ENCODE measurements at regions of chr16 and their contacts with region 1.

Region 1: GRCh38 chr16:74606521-74607310 is at the start of gene GLG1:
- DNase-seq: peak; percentile 91 to 95
- H3K4me3 ChIP-seq: peak within 1 kb of the TSS; percentile 92
- H3K4me3 Mint-ChIP-seq: peak within 1 kb of the TSS; percentile 100
- H3K27ac Mint-ChIP-seq: peak within 1 kb of the TSS; percentile 99
- H3K4me1 ChIP-seq: peaks cover 22% of the 10 kb centered on the region
- H3K4me1 Mint-ChIP-seq: peaks cover 14% of the 10 kb centered on the region
- H3K27me3 ChIP-seq: no peaks in the 10 kb centered on the region
- H3K27me3 Mint-ChIP-seq: no peaks in the 10 kb centered on the region
- CTCF ChIP-seq: no peak
- total RNA-seq, gene GLG1: 197 and 210 TPM in 2 replicates

Region 2: GRCh38 chr16:74296432-74297144 is 310.1 kb before region 1 on chr16 and contains the start of gene PSMD7:
- CTCF ChIA-PET with region 1: no interaction called
- POLR2A ChIA-PET with region 1: no interaction called
- intact Hi-C with region 1: loop called (anchors 5 kb)
- DNase-seq: peak; percentile 96 to 97
- H3K4me3 ChIP-seq: peak within 1 kb of the TSS; percentile 86
- H3K4me3 Mint-ChIP-seq: peak within 1 kb of the TSS; percentile 87
- H3K27ac Mint-ChIP-seq: peak within 1 kb of the TSS; percentile 93
- H3K4me1 ChIP-seq: peaks cover 10% of the 10 kb centered on the region
- H3K4me1 Mint-ChIP-seq: peaks cover 10% of the 10 kb centered on the region
- H3K27me3 ChIP-seq: no peaks in the 10 kb centered on the region
- H3K27me3 Mint-ChIP-seq: no peaks in the 10 kb centered on the region
- CTCF ChIP-seq: no peak
- total RNA-seq, gene PSMD7: 182 and 191 TPM in 2 replicates

Region 3: GRCh38 chr16:74372953-74373846 is 233.5 kb before region 1 on chr16:
- CTCF ChIA-PET with region 1: no interaction called
- POLR2A ChIA-PET with region 1: no interaction called
- intact Hi-C with region 1: loop called (anchors 5 kb)
- DNase-seq: no peak
- H3K4me3 ChIP-seq: no peak overlapping the region
- H3K4me3 Mint-ChIP-seq: no peak overlapping the region
- H3K27ac Mint-ChIP-seq: no peak overlapping the region
- H3K4me1 ChIP-seq: no peaks in the 10 kb centered on the region
- H3K4me1 Mint-ChIP-seq: no peaks in the 10 kb centered on the region
- H3K27me3 ChIP-seq: no peaks in the 10 kb centered on the region; the same call in 1 of the 2 replicates
- H3K27me3 Mint-ChIP-seq: peaks cover 3% of the 10 kb centered on the region
- CTCF ChIP-seq: no peak

Region 4: GRCh38 chr16:74485941-74486340 is 120.8 kb before region 1 on chr16:
- CTCF ChIA-PET with region 1: no interaction called
- POLR2A ChIA-PET with region 1: interaction called, 3 read pairs
- intact Hi-C with region 1: loop called (anchors 2 kb)
- DNase-seq: peak in 1 of 2 experiments; percentile 79
- H3K4me3 ChIP-seq: no peak overlapping the region
- H3K4me3 Mint-ChIP-seq: peak overlapping the region; percentile 32
- H3K27ac Mint-ChIP-seq: peak overlapping the region; percentile 56
- H3K4me1 ChIP-seq: peaks cover 61% of the 10 kb centered on the region
- H3K4me1 Mint-ChIP-seq: peaks cover 53% of the 10 kb centered on the region
- H3K27me3 ChIP-seq: no peaks in the 10 kb centered on the region
- H3K27me3 Mint-ChIP-seq: no peaks in the 10 kb centered on the region
- CTCF ChIP-seq: no peak

Region 5: GRCh38 chr16:74568961-74569631 is 37.6 kb before region 1 on chr16:
- CTCF ChIA-PET with region 1: no interaction called
- POLR2A ChIA-PET with region 1: no interaction called
- intact Hi-C with region 1: loop called (anchors 2 kb)
- DNase-seq: peak in 1 of 2 experiments; percentile 15
- H3K4me3 ChIP-seq: no peak overlapping the region
- H3K4me3 Mint-ChIP-seq: no peak overlapping the region
- H3K27ac Mint-ChIP-seq: no peak overlapping the region
- H3K4me1 ChIP-seq: peaks cover 13% of the 10 kb centered on the region; the same call in 1 of the 2 replicates
- H3K4me1 Mint-ChIP-seq: peaks cover 24% of the 10 kb centered on the region
- H3K27me3 ChIP-seq: no peaks in the 10 kb centered on the region
- H3K27me3 Mint-ChIP-seq: no peaks in the 10 kb centered on the region
- CTCF ChIP-seq: no peak

Region 6: GRCh38 chr16:74673876-74674275 is 67.2 kb after region 1 on chr16:
- CTCF ChIA-PET with region 1: no interaction called
- POLR2A ChIA-PET with region 1: no interaction called
- intact Hi-C with region 1: no loop called
- DNase-seq: no peak
- H3K4me3 ChIP-seq: no peak overlapping the region
- H3K4me3 Mint-ChIP-seq: no peak overlapping the region
- H3K27ac Mint-ChIP-seq: no peak overlapping the region
- H3K4me1 ChIP-seq: no peaks in the 10 kb centered on the region
- H3K4me1 Mint-ChIP-seq: no peaks in the 10 kb centered on the region
- H3K27me3 ChIP-seq: no peaks in the 10 kb centered on the region
- H3K27me3 Mint-ChIP-seq: no peaks in the 10 kb centered on the region
- CTCF ChIP-seq: no peak